ENCODE measurements at regions of chr9 and their contacts with region 1.

Region 1: GRCh38 chr9:4734150-4734549 is 6.9 kb downstream of the AK3 start:
- DNase-seq: no peak
- H3K4me3 ChIP-seq: no peak overlapping the region
- H3K27ac ChIP-seq: no peak overlapping the region
- H3K4me1 ChIP-seq: peaks cover under 1 to 66% (median 35%) of the 10 kb centered on the region in 6 donors
- H3K27me3 ChIP-seq: no peaks in the 10 kb centered on the region
- CTCF ChIP-seq: no peak
- POLR2A ChIP-seq: no peak

Region 2: GRCh38 chr9:4679268-4680172 is 54.6 kb before region 1 on chr9 and contains the start of gene CDC37L1:
- intact Hi-C with region 1: loop called (anchors 5 kb)
- DNase-seq: peak; percentile 100
- H3K4me3 ChIP-seq: peak within 1 kb of the TSS; percentile 57 to 87 (median 70)
- H3K27ac ChIP-seq: peak within 1 kb of the TSS; percentile 95 to 99 (median 98)
- H3K4me1 ChIP-seq: peaks cover 9 to 51% (median 26%) of the 10 kb centered on the region in 6 donors
- H3K27me3 ChIP-seq: no peaks in the 10 kb centered on the region
- CTCF ChIP-seq: peak; percentile 76 to 98 (median 92)
- POLR2A ChIP-seq: peak; percentile 80 to 94 (median 90)
- total RNA-seq, gene CDC37L1: 9.8 to 21.2 (median 13.8) TPM